IMR-90 (cell line): ENCODE measurements at regions of chr12 and their contacts with region 1.

Region 1: DNA sequence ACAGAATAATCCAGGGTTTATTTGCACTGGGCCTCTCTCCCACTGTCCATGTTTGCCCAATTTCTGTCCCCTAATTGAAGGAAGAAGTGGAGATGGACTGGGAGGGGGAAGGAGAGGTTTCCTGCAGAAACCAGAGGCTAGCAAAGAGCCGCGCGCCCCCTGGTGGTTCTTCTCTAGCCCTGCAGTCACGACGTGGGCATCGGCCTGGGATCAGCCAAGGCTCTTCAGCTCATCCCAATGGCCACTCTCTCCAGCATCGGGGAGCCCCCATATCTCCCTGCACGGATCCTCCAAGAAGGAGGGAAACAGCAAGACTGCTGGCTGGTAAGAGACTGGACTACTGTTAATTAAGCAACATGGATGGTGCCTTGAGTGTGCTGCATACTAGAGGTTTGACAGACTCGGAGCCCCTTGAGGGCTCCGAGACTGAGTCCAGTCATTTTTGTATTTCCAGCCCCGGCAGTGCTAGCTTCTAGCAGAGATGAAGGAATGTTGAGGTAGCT is 18.7 kb downstream of the ZBTB39 start:
- DNase-seq: peak; percentile 65
- ATAC-seq: peak; percentile 94
- H3K4me3 ChIP-seq: no peak overlapping the region
- H3K27ac ChIP-seq: no peak overlapping the region
- H3K4me1 ChIP-seq: peaks cover 4% of the 10 kb centered on the region
- H3K27me3 ChIP-seq: peaks cover 2% of the 10 kb centered on the region; the same call in 1 of the 2 replicates
- CTCF ChIP-seq: peak; percentile 92
- POLR2A ChIP-seq: no peak
- RAD21 ChIP-seq: peak; percentile 84

Region 2: GRCh38 chr12:56521590-56522371 is 465.8 kb before region 1 on chr12 and contains the start of gene RBMS2:
- CTCF ChIA-PET with region 1: no interaction called
- POLR2A ChIA-PET with region 1: no interaction called
- dilution Hi-C with region 1: no loop called
- in situ Hi-C with region 1: loop called (anchors 25 kb)
- intact Hi-C with region 1: no loop called
- DNase-seq: peak; percentile 94
- ATAC-seq: peak; percentile 86
- H3K4me3 ChIP-seq: peak within 1 kb of the TSS; percentile 100
- H3K27ac ChIP-seq: peak within 1 kb of the TSS; percentile 95
- H3K4me1 ChIP-seq: peaks cover 8% of the 10 kb centered on the region
- H3K27me3 ChIP-seq: no peaks in the 10 kb centered on the region
- CTCF ChIP-seq: no peak
- POLR2A ChIP-seq: no peak
- RAD21 ChIP-seq: no peak
- total RNA-seq, gene RBMS2: 28.3 and 38.0 TPM in 2 replicates

Region 3: DNA sequence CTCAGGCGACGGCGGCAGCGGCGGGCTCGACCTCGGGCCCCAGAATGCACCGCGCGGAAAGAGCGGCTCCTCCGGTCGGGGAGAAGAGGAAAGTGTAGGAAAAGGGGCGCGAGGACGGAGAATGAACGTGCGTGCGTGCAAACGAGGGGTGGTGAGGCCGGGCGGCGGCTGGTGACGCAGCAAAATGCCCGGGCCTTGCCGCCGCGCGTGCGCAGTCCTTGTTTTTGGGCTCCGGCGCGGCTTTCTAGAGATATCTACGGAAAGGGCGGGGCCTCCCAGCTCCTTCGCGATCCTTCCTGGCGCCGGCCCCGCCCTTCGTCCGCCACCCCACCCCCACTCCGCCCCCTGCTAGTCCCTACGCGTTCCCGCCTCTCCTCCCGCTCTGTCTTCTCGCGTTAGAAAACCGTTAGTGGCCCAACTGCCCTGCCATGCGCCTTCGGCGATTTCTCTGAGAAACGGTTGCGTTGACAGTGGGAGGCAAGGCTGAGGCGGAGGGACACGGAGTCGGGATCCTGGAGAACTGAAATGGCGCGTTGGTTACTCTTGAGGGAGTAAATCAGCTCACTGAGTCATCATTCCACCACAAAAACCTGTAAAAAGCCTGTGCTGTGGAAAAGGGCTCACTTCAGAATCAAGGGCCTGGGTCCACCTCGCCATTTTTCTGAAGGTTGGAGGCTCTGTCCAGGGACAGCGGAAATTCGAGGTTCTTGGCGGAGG is 299.3 kb before region 1 on chr12 and contains the start of gene PTGES3:
- CTCF ChIA-PET with region 1: no interaction called
- POLR2A ChIA-PET with region 1: no interaction called
- dilution Hi-C with region 1: no loop called
- in situ Hi-C with region 1: no loop called
- intact Hi-C with region 1: loop called (anchors 1 kb)
- DNase-seq: peak; percentile 96
- ATAC-seq: peak; percentile 94
- H3K4me3 ChIP-seq: peak within 1 kb of the TSS; percentile 93
- H3K27ac ChIP-seq: peak within 1 kb of the TSS; percentile 99
- H3K4me1 ChIP-seq: peaks cover 6% of the 10 kb centered on the region
- H3K27me3 ChIP-seq: no peaks in the 10 kb centered on the region
- CTCF ChIP-seq: no peak
- POLR2A ChIP-seq: peak; percentile 85
- RAD21 ChIP-seq: no peak
- total RNA-seq, gene PTGES3: 42.7 and 101 TPM in 2 replicates

Region 4: DNA sequence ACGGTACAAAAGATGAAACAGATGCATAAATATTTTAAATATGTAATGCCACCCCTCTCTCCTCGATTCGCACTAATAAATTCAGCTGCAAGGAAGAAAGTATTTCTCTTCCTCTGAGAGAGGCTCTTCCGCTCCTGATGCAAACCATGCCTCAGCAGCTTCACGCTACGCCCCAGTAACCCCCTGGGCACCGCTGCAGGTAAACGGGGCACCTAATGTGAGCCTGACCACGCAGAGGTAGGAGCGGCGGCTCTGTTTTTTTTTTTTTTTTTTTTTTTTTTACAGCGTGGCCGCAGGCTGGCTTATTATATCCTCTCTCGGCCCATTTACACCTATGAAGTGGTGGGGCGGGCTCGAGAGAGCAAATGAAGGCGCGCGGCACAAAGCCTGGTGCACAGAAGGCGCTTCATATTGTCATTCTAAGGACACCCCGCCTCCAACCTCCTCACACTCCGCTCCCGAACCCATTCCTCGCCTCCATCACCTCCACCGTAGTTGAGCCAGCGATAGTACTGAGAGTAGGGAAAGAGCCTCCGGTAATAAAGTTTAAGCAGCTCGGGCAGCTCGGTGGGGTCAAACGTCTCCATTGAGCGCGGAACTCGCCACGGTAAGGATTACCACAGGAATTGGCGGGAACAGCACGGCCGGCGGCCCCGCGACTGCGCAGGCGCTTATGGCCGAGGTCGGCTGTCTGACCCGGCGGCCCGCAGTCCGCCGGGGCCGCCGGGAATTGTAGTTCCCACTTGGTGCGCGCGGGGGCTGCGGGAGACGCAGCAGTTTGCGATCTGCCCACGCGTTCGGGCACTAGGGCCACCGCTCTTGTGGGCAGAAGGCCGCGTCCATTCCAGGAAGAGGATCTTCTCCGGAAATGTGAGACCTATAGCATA is 235.6 kb before region 1 on chr12 and contains the start of gene PRIM1:
- CTCF ChIA-PET with region 1: interaction called, 3 read pairs
- POLR2A ChIA-PET with region 1: no interaction called
- dilution Hi-C with region 1: no loop called
- in situ Hi-C with region 1: no loop called
- intact Hi-C with region 1: loop called (anchors 1 kb)
- DNase-seq: peak; percentile 66
- ATAC-seq: peak; percentile 95
- H3K4me3 ChIP-seq: peak within 1 kb of the TSS; percentile 82
- H3K27ac ChIP-seq: peak within 1 kb of the TSS; percentile 68
- H3K4me1 ChIP-seq: no peaks in the 10 kb centered on the region
- H3K27me3 ChIP-seq: no peaks in the 10 kb centered on the region
- CTCF ChIP-seq: no peak
- POLR2A ChIP-seq: no peak
- RAD21 ChIP-seq: no peak
- total RNA-seq, gene PRIM1: 12.0 and 15.3 TPM in 2 replicates

Region 5: GRCh38 chr12:56763753-56764657 is 223.6 kb before region 1 on chr12:
- CTCF ChIA-PET with region 1: interaction called, 15 read pairs
- POLR2A ChIA-PET with region 1: no interaction called
- dilution Hi-C with region 1: no loop called
- in situ Hi-C with region 1: loop called (anchors 5 kb)
- intact Hi-C with region 1: loop called (anchors 1 kb)
- DNase-seq: peak; percentile 82
- ATAC-seq: peak; percentile 82
- H3K4me3 ChIP-seq: no peak overlapping the region
- H3K27ac ChIP-seq: peak overlapping the region; percentile 32
- H3K4me1 ChIP-seq: no peaks in the 10 kb centered on the region; the same call in 1 of the 2 replicates
- H3K27me3 ChIP-seq: no peaks in the 10 kb centered on the region
- CTCF ChIP-seq: no peak
- POLR2A ChIP-seq: no peak
- RAD21 ChIP-seq: no peak

Region 6: DNA sequence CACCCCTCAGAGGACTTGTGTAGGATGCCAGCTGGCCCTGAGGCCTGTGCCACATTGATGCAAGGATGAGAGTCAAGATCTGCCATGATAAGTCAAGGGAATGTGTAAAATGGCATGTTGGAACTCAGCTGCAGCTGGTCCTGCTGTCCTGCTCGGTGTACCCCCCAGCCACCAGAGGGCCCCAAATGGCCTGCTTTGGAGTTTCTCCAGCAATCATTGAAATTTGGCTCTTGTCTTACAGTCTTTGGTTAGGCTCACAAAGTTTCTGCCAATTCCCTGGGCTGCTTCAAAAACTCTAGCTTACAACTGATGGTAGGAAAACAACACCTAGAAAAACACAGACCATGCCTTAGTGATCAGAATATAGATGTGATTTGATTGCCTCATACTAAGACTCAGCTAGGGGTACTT is 147.7 kb before region 1 on chr12:
- CTCF ChIA-PET with region 1: interaction called, 5 read pairs
- POLR2A ChIA-PET with region 1: no interaction called
- dilution Hi-C with region 1: no loop called
- in situ Hi-C with region 1: no loop called
- intact Hi-C with region 1: loop called (anchors 1 kb)
- DNase-seq: peak; percentile 9
- ATAC-seq: peak; percentile 72
- H3K4me3 ChIP-seq: no peak overlapping the region
- H3K27ac ChIP-seq: no peak overlapping the region
- H3K4me1 ChIP-seq: peaks cover 6% of the 10 kb centered on the region
- H3K27me3 ChIP-seq: peaks cover 12% of the 10 kb centered on the region
- CTCF ChIP-seq: peak; percentile 37
- POLR2A ChIP-seq: no peak
- RAD21 ChIP-seq: peak; percentile 45

Region 7: GRCh38 chr12:57063991-57064685 is 76.5 kb after region 1 on chr12:
- CTCF ChIA-PET with region 1: no interaction called
- POLR2A ChIA-PET with region 1: no interaction called
- dilution Hi-C with region 1: no loop called
- in situ Hi-C with region 1: no loop called
- intact Hi-C with region 1: no loop called
- DNase-seq: peak; percentile 41
- ATAC-seq: no peak
- H3K4me3 ChIP-seq: no peak overlapping the region
- H3K27ac ChIP-seq: no peak overlapping the region
- H3K4me1 ChIP-seq: no peaks in the 10 kb centered on the region
- H3K27me3 ChIP-seq: no peaks in the 10 kb centered on the region
- CTCF ChIP-seq: no peak
- POLR2A ChIP-seq: no peak
- RAD21 ChIP-seq: no peak